OCI-LY7 (cell line): ENCODE measurements at regions of chr6 and their contacts with region 1.

Region 1: GRCh38 chr6:17584241-17584803 is 15.8 kb upstream of the FAM8A1 start:
- DNase-seq: peak; percentile 62
- H3K4me3 ChIP-seq: no peak overlapping the region
- H3K27ac ChIP-seq: no peak overlapping the region
- H3K4me1 ChIP-seq: peaks cover 3% of the 10 kb centered on the region
- CTCF ChIP-seq: peak; percentile 100

Region 2: DNA sequence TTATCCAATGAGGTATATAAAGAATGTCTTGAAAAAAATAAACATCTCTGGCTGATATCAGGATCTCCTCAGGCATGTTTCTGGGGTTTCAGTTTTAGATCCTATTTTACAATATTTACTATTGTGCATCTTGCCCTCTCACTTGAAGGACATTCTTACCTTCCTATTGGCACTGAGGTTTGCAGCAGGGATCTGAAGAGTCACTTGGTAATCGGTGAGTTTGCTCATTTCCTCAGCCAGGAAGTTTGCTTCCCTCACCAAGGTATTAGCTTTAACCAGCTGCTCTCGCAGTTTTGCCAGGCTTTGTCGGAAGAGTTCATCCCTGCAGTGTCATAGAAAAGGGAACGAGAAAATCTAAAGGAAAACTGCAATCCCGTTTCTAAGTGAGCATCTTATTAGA is 224.3 kb after region 1 on chr6:
- CTCF ChIA-PET with region 1: no interaction called
- POLR2A ChIA-PET with region 1: no interaction called
- intact Hi-C with region 1: loop called (anchors 1 kb)
- DNase-seq: no peak
- H3K4me3 ChIP-seq: no peak overlapping the region
- H3K27ac ChIP-seq: no peak overlapping the region
- H3K4me1 ChIP-seq: no peaks in the 10 kb centered on the region
- CTCF ChIP-seq: no peak